Left lung (tissue), 14 donors: ENCODE measurements at regions of chr4 and their contacts with region 1.

Region 1: DNA sequence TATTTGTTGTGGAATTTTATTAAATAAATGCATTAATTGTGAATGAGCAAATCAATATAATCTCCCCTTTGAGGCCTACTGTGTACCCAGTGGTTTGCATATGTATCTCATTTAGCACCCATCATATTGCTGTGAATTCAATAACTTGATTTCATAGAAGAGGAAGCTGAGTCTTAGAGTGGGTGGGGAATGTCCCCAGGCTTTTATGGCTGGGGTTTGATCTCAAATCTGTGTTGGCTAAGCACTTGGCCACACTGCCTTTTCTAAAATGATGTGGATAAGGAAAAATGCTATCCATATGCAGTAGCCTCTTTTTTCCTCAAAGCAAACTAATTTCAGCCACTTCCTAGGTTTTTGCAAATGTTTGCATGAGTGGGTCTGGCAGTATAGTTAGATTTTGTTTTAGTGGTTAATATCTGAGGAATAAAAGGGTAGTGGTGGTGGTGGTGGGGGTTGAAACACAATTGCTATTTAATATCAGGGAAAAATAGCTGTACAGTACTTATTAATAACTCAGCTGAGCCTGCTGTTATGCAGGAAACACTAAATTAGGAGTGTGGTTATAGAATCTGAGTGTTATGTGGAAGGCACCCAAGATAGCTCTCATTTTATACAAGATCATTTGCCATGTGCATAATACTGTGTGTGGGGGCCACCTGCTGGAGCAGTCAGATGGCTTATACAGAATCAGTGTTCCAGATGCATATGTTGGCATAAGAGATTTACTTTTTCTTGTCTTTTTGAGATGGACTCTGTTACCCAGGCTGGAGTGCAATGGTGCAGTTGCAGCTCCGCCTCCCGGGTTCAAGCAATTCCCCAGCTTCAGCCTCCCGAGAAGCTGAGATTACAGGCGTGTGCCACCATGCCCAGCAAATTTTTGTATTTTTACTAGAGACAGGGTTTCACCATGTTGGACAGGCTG is 108.0 kb downstream of the TMEM131L start:
- DNase-seq: peak; percentile 43 to 91 (median 72)
- ATAC-seq: peak; percentile 94
- H3K4me3 ChIP-seq: no peak overlapping the region
- H3K27ac ChIP-seq: no peak overlapping the region
- H3K4me1 ChIP-seq: peaks cover 6 to 23% of the 10 kb centered on the region in 2 donors
- H3K27me3 ChIP-seq: no peaks in the 10 kb centered on the region
- CTCF ChIP-seq: peak; percentile 41 to 48

Region 2: DNA sequence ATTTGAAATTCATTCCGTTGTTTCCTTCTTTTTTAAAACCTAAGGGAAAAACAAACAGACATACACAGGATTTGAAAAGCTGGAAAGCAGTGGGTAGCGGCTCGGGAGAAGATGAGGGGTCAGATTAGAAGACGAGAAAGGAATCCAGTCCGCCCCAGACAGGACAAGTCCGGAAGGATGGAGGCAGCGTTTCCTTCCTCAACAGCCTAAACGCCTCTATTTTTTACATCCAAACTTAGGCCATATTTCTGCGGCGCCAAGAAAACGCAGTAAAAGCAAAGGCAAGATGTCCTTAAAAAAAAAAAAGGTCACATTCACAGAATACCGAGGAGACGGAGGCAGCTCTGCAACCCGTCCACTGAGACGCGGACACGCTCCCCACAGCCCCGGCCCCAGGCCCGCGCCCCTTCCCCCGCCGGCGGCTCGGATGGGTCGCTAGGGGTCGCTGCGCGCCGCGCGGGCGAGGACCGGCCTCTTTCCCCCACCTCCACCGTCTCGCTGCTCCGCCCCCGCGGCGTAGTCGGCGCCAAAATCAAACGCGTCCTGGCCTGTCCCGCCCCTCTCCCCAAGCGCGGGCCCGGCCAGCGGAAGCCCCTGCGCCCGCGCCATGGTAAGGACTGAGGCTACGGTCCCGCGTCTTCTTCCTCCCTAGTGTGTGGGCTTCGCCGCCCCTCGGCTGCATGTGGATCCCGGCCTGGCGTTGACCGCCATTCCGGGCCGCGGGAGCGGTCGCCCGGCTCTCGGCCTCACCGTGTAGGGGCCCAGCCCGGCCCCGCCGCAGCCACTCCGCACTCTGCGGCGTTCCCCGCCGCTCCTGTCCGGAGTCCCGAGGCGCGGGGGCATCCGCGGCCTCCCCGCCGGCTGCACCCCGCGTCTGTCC is 229.8 kb before region 1 on chr4 and contains the start of gene MND1:
- intact Hi-C with region 1: loop called in 1 of 2 experiments (anchors 5 kb)
- DNase-seq: peak; percentile 89 to 96 (median 92)
- ATAC-seq: peak; percentile 98
- H3K4me3 ChIP-seq: peak within 1 kb of the TSS; percentile 80 to 84
- H3K27ac ChIP-seq: no peak within 1 kb of the TSS
- H3K4me1 ChIP-seq: peaks cover 4 to 28% of the 10 kb centered on the region in 2 donors
- H3K27me3 ChIP-seq: no peaks in the 10 kb centered on the region
- CTCF ChIP-seq: peak; percentile 85 to 98
- polyA plus RNA-seq, gene MND1: 8.8 to 19.2 (median 11.3) TPM

Region 3: GRCh38 chr4:153432968-153433753 is 141.0 kb before region 1 on chr4:
- intact Hi-C with region 1: loop called in 1 of 2 experiments (anchors 10 kb)
- DNase-seq: peak in 2 of 4 donors; percentile 33 to 75
- ATAC-seq: peak; percentile 94
- H3K4me3 ChIP-seq: peak overlapping the region in 1 of 2 donors; percentile 38
- H3K27ac ChIP-seq: peak overlapping the region in 1 of 2 donors; percentile 68
- H3K4me1 ChIP-seq: peaks cover 0 to 17% of the 10 kb centered on the region in 2 donors
- H3K27me3 ChIP-seq: no peaks in the 10 kb centered on the region
- CTCF ChIP-seq: peak; percentile 55 to 62